Prostate gland (tissue), 2 donors: ENCODE measurements at regions of chr2 and their contacts with region 1.

Region 1: DNA sequence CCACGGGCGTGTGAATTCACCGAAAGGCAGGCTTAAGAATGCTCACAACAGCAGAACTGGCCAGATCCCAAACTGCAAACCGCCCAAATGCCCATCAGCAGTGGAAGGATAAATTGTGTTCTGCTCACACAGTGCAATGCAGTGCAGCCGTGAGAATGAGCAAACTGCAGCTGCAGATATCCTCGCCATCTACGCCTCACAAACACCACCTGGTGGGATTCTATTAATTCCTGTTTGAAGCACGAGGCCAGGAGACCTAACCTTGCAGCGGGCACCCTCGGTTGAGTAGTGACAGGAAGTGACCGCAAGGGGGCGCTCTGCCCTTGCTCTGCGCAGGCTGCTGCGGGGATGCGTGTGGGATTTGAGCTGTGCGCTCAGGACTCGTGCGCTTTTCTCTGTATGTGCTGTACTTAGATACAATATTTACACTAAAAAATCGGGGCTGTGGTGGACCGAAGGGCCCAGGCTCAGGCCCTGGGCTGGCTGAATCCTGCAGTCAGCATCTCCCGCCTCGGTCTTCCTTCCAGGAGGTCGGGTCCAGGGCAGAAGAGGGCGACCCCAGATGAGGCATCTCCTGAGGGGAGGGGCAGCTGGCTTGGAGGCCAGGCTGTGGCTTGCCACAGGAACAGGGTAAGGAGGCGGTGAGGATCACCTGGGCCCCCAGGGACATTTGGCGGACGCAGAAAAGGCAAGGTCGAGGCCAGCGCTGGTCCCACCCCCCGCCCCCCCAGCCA is 19.8 kb upstream of the PDIA6 start:
- DNase-seq: peak; percentile 75
- H3K4me3 ChIP-seq: no peak overlapping the region
- H3K27ac ChIP-seq: no peak overlapping the region
- H3K4me1 ChIP-seq: no peaks in the 10 kb centered on the region
- H3K27me3 ChIP-seq: peaks cover 5% of the 10 kb centered on the region
- CTCF ChIP-seq: peak; percentile 90 to 98 (median 94)
- POLR2A ChIP-seq: no peak

Region 2: DNA sequence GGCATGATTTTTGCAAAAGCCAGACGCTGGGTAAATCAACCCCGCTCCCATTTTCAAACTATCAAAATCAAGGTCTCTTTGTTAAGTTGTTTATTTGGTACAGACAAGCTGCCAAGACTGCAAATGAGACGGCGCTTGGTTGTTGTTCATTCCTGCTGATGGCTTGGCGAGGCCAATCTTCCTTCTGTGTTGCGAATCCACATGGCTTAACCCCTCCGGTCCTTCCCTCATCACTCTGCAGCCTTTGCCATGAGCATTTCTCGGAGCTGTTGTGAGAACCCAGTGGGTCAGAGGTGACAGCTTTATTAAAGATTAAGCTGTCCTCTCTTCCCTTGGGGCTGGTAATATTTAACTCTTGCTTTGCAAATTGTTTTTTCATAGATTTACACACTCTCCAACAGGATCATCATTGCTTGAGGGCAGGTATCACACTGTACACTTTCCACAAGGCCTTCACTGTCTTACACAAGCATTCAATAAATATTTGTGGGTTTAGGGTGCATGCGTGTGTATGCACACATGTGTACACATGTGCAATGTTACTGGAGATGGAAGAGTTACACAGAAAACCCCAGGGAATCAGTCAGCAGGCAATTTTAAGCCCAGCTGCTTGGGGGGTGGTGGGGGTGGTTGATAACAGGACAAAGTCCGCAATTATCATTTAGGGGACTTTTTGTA is 51.6 kb after region 1 on chr2:
- intact Hi-C with region 1: loop called (anchors 5 kb)
- DNase-seq: no peak
- H3K4me3 ChIP-seq: no peak overlapping the region
- H3K27ac ChIP-seq: no peak overlapping the region
- H3K4me1 ChIP-seq: no peaks in the 10 kb centered on the region
- H3K27me3 ChIP-seq: no peaks in the 10 kb centered on the region
- CTCF ChIP-seq: no peak
- POLR2A ChIP-seq: no peak

Region 3: DNA sequence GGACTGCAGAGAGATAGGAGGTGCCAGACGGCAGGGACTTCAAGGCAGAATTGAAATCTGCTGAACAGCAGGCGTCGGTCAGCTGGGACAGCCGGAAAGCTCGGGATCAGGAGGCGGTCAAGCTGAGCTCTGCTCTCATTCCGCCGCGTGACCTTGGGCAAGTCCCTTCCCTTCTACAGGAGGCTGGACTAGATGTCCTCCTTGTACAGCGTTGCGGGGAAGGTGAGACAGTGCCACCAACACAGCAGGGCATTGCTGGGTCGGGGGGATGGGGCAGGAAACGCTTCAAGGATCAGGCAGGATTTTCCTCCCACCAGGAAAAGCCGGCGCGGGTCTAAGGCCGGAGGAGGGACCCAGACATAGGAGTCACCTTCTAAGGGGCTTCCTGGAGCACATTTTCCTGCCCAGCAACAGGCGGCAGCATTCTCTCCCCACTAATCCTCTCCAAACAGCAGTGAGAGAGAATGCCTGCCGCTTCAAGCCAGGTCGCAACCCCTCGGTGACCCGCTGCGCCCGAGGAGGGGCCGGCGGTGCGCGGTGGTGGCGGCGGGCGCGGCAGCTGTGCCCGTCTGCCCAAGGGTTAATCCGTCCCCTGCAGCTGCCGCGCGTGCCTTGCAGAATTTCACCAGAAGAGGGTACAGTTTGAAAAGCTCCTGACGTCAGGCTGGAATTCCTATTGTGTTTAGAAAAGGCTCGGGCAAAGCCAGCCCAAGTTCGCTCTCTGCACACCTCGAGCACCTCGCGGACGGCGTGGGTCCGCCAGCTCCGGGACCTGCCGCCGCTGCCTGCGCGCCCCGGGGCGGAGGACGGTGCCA is 79.1 kb after region 1 on chr2 and contains the start of gene KCNF1:
- intact Hi-C with region 1: loop called (anchors 5 kb)
- DNase-seq: no peak
- H3K4me3 ChIP-seq: peak within 1 kb of the TSS; percentile 19 to 25
- H3K27ac ChIP-seq: no peak within 1 kb of the TSS
- H3K4me1 ChIP-seq: no peaks in the 10 kb centered on the region
- H3K27me3 ChIP-seq: peaks cover 4% of the 10 kb centered on the region
- CTCF ChIP-seq: peak in 1 of 4 experiments; percentile 25
- POLR2A ChIP-seq: no peak
- total RNA-seq, gene KCNF1: 1.0 TPM in 1 of 2 donors, not detected in the other

Region 4: DNA sequence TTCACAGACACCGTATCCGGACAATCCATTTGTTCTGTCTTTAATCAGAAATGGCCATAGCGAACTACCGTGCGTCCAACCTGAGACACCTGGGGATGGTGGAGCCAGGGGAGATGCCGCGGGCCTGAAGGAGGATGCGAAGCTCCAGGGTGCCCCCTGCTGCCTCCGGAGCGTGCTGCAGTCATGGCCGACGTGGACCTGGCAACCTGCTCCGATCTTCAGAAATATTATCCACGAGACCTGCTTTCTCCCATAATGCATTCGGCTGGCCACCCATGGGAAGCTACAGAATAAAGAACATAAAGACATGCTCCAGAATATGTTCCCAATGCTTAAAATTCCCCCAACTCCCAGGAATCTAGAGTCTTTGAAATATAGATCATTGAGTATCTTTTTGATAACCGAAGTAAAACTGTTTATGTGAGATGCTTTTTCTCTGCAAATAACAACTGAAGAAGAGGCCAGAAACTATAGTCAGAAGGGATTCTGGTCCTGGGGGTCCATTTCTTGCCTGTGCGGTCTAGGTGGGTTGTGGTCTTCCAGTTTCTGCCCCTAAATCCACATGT is 292.2 kb after region 1 on chr2:
- intact Hi-C with region 1: loop called (anchors 1 kb)
- DNase-seq: peak; percentile 47
- H3K4me3 ChIP-seq: no peak overlapping the region
- H3K27ac ChIP-seq: no peak overlapping the region
- H3K4me1 ChIP-seq: no peaks in the 10 kb centered on the region
- H3K27me3 ChIP-seq: no peaks in the 10 kb centered on the region
- CTCF ChIP-seq: peak; percentile 51 to 83 (median 76)
- POLR2A ChIP-seq: no peak

Region 5: GRCh38 chr2:11446733-11447248 is 614.4 kb after region 1 on chr2:
- intact Hi-C with region 1: loop called (anchors 10 kb)
- DNase-seq: peak; percentile 53
- H3K4me3 ChIP-seq: no peak overlapping the region
- H3K27ac ChIP-seq: no peak overlapping the region
- H3K4me1 ChIP-seq: no peaks in the 10 kb centered on the region
- H3K27me3 ChIP-seq: no peaks in the 10 kb centered on the region
- CTCF ChIP-seq: peak; percentile 65 to 78 (median 77)
- POLR2A ChIP-seq: no peak

Region 6: GRCh38 chr2:11962707-11963328 is 1130.4 kb after region 1 on chr2:
- intact Hi-C with region 1: no loop called
- DNase-seq: peak; percentile 40
- H3K4me3 ChIP-seq: no peak overlapping the region
- H3K27ac ChIP-seq: peak overlapping the region; percentile 39 to 52
- H3K4me1 ChIP-seq: no peaks in the 10 kb centered on the region
- H3K27me3 ChIP-seq: no peaks in the 10 kb centered on the region
- CTCF ChIP-seq: no peak
- POLR2A ChIP-seq: no peak